ENCODE measurements at regions of chr2 and their contacts with region 1.

Region 1: GRCh38 chr2:148674063-148675020 is 29.8 kb downstream of the EPC2 start:
- DNase-seq: peak; percentile 52
- ATAC-seq: peak; percentile 75
- H3K4me3 Mint-ChIP-seq: no peak overlapping the region
- H3K27ac Mint-ChIP-seq: peak overlapping the region; percentile 64
- H3K4me1 Mint-ChIP-seq: peaks cover 59% of the 10 kb centered on the region
- H3K27me3 Mint-ChIP-seq: no peaks in the 10 kb centered on the region

Region 2: GRCh38 chr2:148658807-148659722 is 15.3 kb before region 1 on chr2:
- CTCF ChIA-PET with region 1: interaction called, 6 read pairs
- POLR2A ChIA-PET with region 1: no interaction called
- intact Hi-C with region 1: loop called in 1 of 2 experiments (anchors 2 kb)
- DNase-seq: no peak
- ATAC-seq: peak; percentile 69
- H3K4me3 Mint-ChIP-seq: peak overlapping the region; percentile 43
- H3K27ac Mint-ChIP-seq: peak overlapping the region; percentile 65
- H3K4me1 Mint-ChIP-seq: peaks cover 73% of the 10 kb centered on the region
- H3K27me3 Mint-ChIP-seq: no peaks in the 10 kb centered on the region

Measured in activated CD4-positive, alpha-beta T cell treated with anti-CD3 and anti-CD28 coated beads for 36 hours (primary cell).